Activated CD4-positive, alpha-beta memory T cell treated with anti-CD3 and anti-CD28 coated beads for 36 hours (primary cell): ENCODE measurements at regions of chr20 and their contacts with region 1.

Region 1: DNA sequence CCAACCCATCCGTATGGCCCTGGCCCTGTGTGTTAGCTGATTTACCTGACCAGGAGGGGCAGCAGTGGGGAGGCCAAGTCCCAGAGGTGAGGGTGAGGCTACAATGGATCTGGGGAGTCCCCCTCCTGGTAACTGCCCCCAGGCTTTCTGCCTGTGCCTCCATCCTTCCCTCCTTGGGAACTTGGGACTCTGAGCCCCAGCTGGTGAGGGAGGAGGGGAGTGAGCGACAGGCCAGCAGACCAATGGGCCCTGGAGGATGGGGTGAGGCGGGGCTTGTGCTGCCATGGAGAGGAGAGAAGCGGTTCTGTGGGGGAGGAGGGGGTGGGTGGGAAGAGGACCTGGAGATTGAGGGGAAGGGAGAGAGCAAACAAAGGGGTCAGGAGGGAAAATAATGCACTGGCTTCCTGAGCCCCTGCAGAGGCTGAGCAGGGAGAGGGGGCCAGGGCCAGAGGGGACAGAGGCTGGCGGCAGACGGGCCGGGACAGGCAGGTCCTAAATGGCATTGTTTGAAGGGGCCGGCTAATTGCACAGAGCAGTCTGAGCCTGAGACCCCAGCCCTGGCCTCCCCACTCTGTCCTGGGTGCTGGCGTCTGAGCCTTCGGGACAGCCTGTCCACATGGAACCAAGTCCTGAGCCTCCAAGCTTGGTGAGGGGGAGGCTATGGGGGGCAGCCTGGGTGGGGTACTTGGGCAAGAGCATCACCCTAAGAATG is 17.5 kb downstream of the DNMT3B start:
- DNase-seq: no peak
- H3K4me3 Mint-ChIP-seq: no peak overlapping the region
- H3K27ac Mint-ChIP-seq: no peak overlapping the region
- H3K4me1 Mint-ChIP-seq: peaks cover 6% of the 10 kb centered on the region
- H3K27me3 Mint-ChIP-seq: no peaks in the 10 kb centered on the region

Region 2: DNA sequence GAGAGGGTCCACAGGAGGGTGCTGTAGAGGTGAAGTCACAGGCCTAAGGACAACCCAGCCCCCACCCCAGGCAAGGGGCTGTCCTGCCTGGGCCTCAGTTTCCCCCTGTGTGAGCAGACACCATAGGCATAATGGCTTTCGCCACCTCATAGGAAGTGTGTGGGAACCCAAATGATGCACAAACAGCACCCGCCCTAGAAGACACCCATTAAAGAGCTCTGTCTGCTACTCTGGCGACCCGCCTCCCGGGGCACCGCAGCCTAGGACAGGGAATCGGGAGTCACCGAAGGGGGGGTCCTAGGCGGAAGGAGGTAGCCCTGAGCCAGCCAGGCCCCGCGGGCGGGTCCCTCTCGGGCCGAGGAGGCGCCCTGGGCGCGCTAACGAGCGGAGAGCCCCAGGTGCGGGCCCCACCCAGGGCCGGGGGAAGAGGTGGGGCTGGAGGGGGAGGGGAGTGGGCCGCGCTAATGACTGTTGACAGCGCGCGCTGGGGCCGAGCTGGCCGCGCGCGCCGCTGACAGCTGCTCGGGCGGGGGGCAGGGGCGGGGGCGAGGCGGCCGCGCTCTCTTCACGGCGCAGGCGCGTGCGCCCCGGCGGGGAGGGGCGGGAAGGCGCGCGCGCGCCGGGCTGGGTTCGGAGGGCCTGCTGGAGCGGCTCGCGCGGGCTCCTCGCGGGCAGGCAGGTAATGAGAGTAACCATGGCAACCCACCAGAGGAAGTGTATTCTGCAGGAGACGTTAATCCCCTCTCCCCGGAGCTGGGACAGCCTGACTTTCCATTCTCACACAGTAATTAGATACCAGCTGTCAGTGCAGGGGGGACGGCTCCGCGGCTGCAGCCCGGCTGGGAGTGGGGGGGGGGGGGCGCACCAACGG is 243.5 kb before region 1 on chr20:
- CTCF ChIA-PET with region 1: interaction called, 12 read pairs
- POLR2A ChIA-PET with region 1: no interaction called
- intact Hi-C with region 1: no loop called
- DNase-seq: peak; percentile 84
- H3K4me3 Mint-ChIP-seq: peak overlapping the region; percentile 72
- H3K27ac Mint-ChIP-seq: peak overlapping the region; percentile 89
- H3K4me1 Mint-ChIP-seq: peaks cover 74% of the 10 kb centered on the region
- H3K27me3 Mint-ChIP-seq: no peaks in the 10 kb centered on the region

Region 3: GRCh38 chr20:32674362-32674789 is 105.3 kb before region 1 on chr20:
- CTCF ChIA-PET with region 1: interaction called, 330 read pairs
- POLR2A ChIA-PET with region 1: interaction called, 4 read pairs
- intact Hi-C with region 1: loop called (anchors 1 kb)
- DNase-seq: peak; percentile 80
- H3K4me3 Mint-ChIP-seq: no peak overlapping the region
- H3K27ac Mint-ChIP-seq: no peak overlapping the region
- H3K4me1 Mint-ChIP-seq: peaks cover 9% of the 10 kb centered on the region
- H3K27me3 Mint-ChIP-seq: peaks cover 1% of the 10 kb centered on the region

Region 4: DNA sequence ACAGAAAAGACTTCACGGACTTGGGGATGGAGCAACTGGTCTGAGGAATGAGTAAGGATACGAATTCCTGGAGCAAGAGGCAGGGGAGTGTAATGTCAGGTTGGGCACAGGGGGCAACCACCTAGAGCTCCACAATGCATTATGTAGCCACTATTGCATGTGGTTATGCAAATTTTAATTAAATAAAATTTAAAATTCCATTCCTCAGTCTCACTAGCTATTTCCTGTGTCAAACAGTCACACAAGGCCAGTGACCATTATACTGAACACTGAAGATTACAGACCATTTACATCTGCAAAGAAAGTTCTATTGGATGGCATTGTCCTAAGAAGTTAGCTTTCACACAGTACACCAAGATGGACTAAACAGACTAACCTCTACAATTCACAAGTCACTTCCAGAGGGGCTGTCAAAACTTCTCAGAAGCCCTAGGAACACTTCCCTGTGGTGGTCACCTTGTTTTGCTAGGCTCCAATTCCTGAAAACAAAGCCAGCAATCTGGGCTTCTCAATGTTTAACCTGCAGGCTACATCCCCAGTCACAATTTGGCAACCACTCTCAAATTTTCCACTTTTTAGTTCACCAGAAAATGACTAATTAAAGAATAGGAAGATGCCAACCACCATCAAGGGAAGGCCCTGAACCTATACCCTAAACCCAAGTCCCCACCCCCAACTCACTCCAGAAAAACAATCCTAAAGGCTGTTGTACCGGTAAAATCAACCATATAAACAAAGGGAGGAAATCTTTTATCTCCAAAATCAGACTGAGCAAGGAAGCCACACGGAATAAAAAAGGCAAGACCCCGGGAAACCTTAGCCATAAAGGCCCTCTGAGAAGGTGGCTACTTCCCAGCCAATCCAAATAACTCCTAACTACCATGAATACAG is 71.7 kb before region 1 on chr20:
- CTCF ChIA-PET with region 1: interaction called, 15 read pairs
- POLR2A ChIA-PET with region 1: no interaction called
- intact Hi-C with region 1: no loop called
- DNase-seq: no peak
- H3K4me3 Mint-ChIP-seq: no peak overlapping the region
- H3K27ac Mint-ChIP-seq: peak overlapping the region; percentile 52
- H3K4me1 Mint-ChIP-seq: peaks cover 7% of the 10 kb centered on the region
- H3K27me3 Mint-ChIP-seq: no peaks in the 10 kb centered on the region

Region 5: GRCh38 chr20:32743237-32744112 is 36.2 kb before region 1 on chr20 and contains the start of gene COMMD7:
- CTCF ChIA-PET with region 1: interaction called, 35 read pairs
- POLR2A ChIA-PET with region 1: interaction called, 3 read pairs
- intact Hi-C with region 1: loop called (anchors 5 kb)
- DNase-seq: peak; percentile 90
- H3K4me3 Mint-ChIP-seq: peak within 1 kb of the TSS; percentile 97
- H3K27ac Mint-ChIP-seq: peak within 1 kb of the TSS; percentile 94
- H3K4me1 Mint-ChIP-seq: peaks cover 30% of the 10 kb centered on the region
- H3K27me3 Mint-ChIP-seq: no peaks in the 10 kb centered on the region
- total RNA-seq, gene COMMD7: 38.1 to 39.6 TPM

Region 6: DNA sequence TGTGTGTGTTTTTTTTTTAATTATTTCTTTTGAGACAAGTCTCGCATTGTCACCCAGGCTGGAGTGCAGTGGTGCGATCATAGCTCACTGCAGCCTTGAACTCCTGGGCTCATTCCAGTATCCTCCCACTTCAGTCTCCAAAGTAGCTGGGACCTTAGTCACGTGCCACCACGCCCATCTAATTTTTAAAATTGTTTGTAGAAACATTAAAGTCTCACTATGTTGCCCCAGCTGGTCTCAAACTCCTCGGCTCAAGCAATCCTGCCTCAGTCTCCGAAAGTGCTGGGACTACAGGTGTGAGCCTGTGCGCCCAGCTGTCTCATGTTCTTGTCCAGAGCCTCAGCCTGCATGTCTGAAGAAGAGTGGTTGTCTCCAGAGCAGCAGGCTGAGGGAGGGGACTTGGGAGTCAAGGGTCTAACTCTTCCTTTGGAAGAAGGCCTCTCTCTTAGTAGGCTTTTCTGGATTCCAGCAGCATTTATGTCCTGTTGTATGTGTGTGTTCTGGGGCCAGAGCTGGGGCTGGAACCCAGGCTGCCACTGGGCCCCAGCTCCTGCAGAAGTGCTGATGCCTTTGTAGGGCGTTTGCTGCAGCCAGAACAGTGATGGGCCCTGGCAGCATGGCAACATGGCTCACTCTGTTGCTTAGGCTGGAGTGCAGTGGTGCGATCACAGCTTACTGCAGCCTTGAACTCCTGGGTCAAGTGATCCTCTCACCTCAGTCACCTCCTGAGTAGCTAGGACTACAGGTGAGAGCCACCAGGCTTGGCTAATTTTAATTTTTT is 12.0 kb before region 1 on chr20:
- CTCF ChIA-PET with region 1: interaction called, 37 read pairs
- POLR2A ChIA-PET with region 1: no interaction called
- intact Hi-C with region 1: no loop called
- DNase-seq: no peak
- H3K4me3 Mint-ChIP-seq: no peak overlapping the region
- H3K27ac Mint-ChIP-seq: no peak overlapping the region
- H3K4me1 Mint-ChIP-seq: peaks cover 16% of the 10 kb centered on the region
- H3K27me3 Mint-ChIP-seq: peaks cover 1% of the 10 kb centered on the region

Region 7: DNA sequence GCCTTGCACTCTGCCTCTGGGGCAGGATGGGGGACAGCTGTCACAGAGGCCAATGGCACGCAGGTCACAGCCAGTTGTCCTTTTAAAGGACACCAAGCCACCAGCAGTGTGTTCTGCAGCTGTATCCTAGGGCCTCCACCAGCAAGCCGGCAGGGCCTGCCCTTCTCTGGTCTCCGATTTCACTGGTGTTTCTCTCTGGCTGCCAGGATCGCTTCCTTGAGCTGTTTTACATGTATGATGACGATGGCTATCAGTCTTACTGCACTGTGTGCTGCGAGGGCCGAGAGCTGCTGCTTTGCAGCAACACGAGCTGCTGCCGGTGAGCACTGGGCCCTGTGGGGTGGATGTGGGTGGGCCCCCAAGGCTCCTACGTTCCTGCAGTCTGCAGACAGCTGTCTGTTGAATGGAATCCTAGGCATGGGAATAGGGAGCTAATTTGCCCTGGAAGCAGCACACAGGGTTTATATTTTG is 17.4 kb after region 1 on chr20:
- CTCF ChIA-PET with region 1: interaction called, 86 read pairs
- POLR2A ChIA-PET with region 1: no interaction called
- intact Hi-C with region 1: no loop called
- DNase-seq: no peak
- H3K4me3 Mint-ChIP-seq: no peak overlapping the region
- H3K27ac Mint-ChIP-seq: no peak overlapping the region
- H3K4me1 Mint-ChIP-seq: peaks cover 34% of the 10 kb centered on the region
- H3K27me3 Mint-ChIP-seq: no peaks in the 10 kb centered on the region